Sigmoid colon (tissue), 7 donors: ENCODE measurements at regions of chr17 and their contacts with region 1.

Region 1: GRCh38 chr17:59155439-59156182 is at the start of gene PRR11:
- DNase-seq: peak; percentile 98
- H3K4me3 ChIP-seq: peak within 1 kb of the TSS; percentile 59 to 81 (median 70)
- H3K27ac ChIP-seq: peak within 1 kb of the TSS; percentile 81 to 92 (median 88)
- H3K4me1 ChIP-seq: peaks cover 0 to 25% (median 19%) of the 10 kb centered on the region in 4 donors
- H3K27me3 ChIP-seq: no peaks in the 10 kb centered on the region
- CTCF ChIP-seq: no peak
- EP300 ChIP-seq: no peak
- POLR2A ChIP-seq: no peak
- total RNA-seq, gene PRR11: 0.36 to 1.2 (median 0.49) TPM in 3 of 4 donors, not detected in the other

Region 2: DNA sequence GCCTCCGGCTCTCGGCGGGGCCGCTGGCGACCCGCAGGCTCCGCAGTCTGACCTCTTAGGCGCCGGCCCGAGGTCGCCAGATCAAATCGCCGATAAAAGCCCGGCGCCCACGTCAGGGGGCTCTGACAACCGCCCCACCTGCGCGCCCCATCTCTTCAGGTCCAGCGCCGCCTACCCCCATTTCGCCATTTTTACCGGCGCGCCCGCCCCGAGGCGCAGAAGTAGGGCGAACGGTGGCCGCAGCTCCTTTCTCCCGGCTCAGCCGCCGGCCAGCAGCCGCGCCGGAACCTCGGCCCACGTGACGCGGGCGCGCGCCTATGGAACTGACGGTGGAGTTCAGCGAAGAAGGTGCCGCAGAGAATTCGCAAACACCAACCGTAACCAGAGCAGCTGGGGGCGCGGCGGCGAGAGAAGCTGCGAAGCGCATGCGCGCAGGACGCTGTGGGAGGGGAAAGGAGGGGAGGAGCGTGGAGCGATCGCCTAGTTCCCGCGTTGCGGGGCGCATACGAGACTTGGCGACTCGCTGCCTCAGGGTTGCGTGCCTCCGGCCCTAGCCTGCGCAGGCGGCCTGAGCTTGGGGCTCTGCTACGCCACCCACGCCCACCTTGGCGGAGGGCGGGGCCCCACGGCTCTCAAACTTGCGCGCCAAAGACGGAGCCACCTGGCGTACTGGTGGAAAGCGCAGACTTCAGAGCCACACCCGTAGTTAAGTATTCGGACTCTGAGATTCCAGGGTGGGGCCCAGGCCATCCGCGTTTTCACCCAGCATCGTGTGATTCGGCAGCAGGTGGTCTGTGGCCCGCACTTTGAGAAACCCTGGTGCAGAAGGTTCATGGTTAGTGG is 48.9 kb before region 1 on chr17 and contains the start of gene TRIM37:
- intact Hi-C with region 1: loop called (anchors 1 kb)
- DNase-seq: peak; percentile 99
- H3K4me3 ChIP-seq: peak within 1 kb of the TSS; percentile 74 to 100 (median 95)
- H3K27ac ChIP-seq: peak within 1 kb of the TSS; percentile 94 to 98 (median 97)
- H3K4me1 ChIP-seq: peaks cover 0 to 33% (median 24%) of the 10 kb centered on the region in 4 donors
- H3K27me3 ChIP-seq: no peaks in the 10 kb centered on the region
- CTCF ChIP-seq: no peak
- EP300 ChIP-seq: no peak
- POLR2A ChIP-seq: peak; percentile 58 to 75
- total RNA-seq, gene TRIM37: 20.2 to 37.8 (median 25.7) TPM